ENCODE measurements at regions of chr22 and their contacts with region 1.

Region 1: GRCh38 chr22:30196141-30196879 is 50.2 kb downstream of the LIF start:
- DNase-seq: peak; percentile 100
- H3K4me3 ChIP-seq: peak overlapping the region in 1 of 3 experiments; percentile 1
- H3K27ac ChIP-seq: peak overlapping the region; percentile 99
- H3K4me1 ChIP-seq: peaks cover 37% of the 10 kb centered on the region
- H3K27me3 ChIP-seq: no peaks in the 10 kb centered on the region
- CTCF ChIP-seq: no peak

Region 2: GRCh38 chr22:30116362-30117117 is 79.8 kb before region 1 on chr22:
- CTCF ChIA-PET with region 1: no interaction called
- dilution Hi-C with region 1: no loop called
- in situ Hi-C with region 1: no loop called
- intact Hi-C with region 1: loop called (anchors 5 kb)
- DNase-seq: peak; percentile 76
- H3K4me3 ChIP-seq: no peak overlapping the region
- H3K27ac ChIP-seq: peak overlapping the region; percentile 58
- H3K4me1 ChIP-seq: peaks cover 16% of the 10 kb centered on the region
- H3K27me3 ChIP-seq: no peaks in the 10 kb centered on the region
- CTCF ChIP-seq: no peak

Region 3: GRCh38 chr22:30178181-30179126 is 17.9 kb before region 1 on chr22:
- CTCF ChIA-PET with region 1: no interaction called
- dilution Hi-C with region 1: no loop called
- in situ Hi-C with region 1: no loop called
- intact Hi-C with region 1: loop called (anchors 1 kb)
- DNase-seq: no peak
- H3K4me3 ChIP-seq: no peak overlapping the region
- H3K27ac ChIP-seq: no peak overlapping the region
- H3K4me1 ChIP-seq: peaks cover 18% of the 10 kb centered on the region
- H3K27me3 ChIP-seq: no peaks in the 10 kb centered on the region
- CTCF ChIP-seq: peak in 1 of 2 donors; percentile 16

Region 4: DNA sequence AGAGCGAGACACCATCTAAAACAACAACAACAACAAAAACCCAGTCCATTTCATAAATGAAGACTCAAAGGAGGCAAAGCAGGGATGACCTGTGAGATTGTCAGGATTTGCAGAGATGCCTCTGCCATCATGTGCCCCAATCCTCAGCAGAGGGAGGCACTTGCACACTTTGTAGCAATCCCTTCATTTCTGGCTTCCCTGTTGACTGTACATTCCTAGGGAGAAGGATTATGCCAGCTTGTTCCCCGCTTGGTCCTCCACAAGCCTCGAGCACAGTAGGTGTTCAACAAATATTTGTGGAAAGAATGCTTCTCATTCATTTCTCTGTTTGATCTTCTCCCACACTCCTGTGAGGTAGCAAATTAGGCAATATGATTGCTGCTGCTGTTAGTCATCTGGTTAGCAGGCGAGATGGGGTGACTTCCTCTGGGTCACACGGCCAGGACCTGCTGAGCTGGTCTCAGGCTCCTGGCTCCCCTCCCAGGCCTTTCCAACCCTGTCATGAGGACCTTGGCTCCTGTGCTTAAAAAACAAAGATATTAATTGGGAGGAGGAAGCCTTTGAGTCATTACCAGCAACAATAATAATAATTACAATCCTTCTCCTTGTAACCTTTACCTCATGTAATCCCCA is 16.2 kb after region 1 on chr22:
- CTCF ChIA-PET with region 1: no interaction called
- dilution Hi-C with region 1: no loop called
- in situ Hi-C with region 1: no loop called
- intact Hi-C with region 1: loop called (anchors 2 kb)
- DNase-seq: peak; percentile 99
- H3K4me3 ChIP-seq: no peak overlapping the region
- H3K27ac ChIP-seq: peak overlapping the region; percentile 96
- H3K4me1 ChIP-seq: peaks cover 63% of the 10 kb centered on the region
- H3K27me3 ChIP-seq: no peaks in the 10 kb centered on the region
- CTCF ChIP-seq: peak in 1 of 2 donors; percentile 37

Region 5: DNA sequence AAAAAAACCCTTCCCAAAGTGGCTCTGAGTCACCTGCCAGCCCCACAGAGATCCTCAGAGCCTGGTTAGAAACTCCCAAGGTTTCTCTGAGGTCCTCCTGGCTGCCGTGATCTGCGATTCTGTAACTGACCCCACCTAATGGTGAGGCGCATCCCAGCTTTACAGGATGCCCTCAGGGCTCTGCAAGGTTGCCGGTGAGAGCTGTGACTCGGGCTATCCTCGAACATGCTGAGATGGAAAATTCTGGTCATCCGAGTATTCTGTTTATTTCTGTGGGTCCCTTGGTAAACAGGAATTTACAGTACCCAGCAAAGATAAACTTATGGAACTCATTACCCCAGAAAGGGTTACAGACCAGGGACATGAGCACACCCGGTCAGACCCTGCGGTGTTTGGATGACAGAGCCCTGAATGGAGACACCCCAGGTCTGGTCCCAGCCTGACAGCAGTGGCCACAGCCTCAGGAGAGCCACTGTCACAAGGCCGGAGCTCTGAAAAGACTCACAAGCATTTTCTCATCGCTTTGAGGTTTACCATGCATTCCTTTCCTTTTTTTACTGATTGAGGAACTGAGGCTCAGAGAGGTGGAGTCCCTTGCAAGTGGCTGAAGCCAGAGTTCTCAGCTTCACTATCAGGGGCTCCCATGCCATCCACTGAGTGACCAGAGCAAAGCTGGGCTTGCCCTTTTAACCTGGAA is 28.0 kb after region 1 on chr22:
- CTCF ChIA-PET with region 1: no interaction called
- dilution Hi-C with region 1: no loop called
- in situ Hi-C with region 1: no loop called
- intact Hi-C with region 1: loop called (anchors 1 kb)
- DNase-seq: peak; percentile 93
- H3K4me3 ChIP-seq: no peak overlapping the region
- H3K27ac ChIP-seq: peak overlapping the region; percentile 86
- H3K4me1 ChIP-seq: peaks cover 58% of the 10 kb centered on the region
- H3K27me3 ChIP-seq: no peaks in the 10 kb centered on the region
- CTCF ChIP-seq: peak in 1 of 2 donors; percentile 24

Region 6: GRCh38 chr22:30245985-30246901 is 49.9 kb after region 1 on chr22 and contains the start of gene LIF:
- CTCF ChIA-PET with region 1: no interaction called
- dilution Hi-C with region 1: no loop called
- in situ Hi-C with region 1: no loop called
- intact Hi-C with region 1: loop called (anchors 1 kb)
- DNase-seq: peak; percentile 76
- H3K4me3 ChIP-seq: peak within 1 kb of the TSS; percentile 74 to 80 (median 78)
- H3K27ac ChIP-seq: peak within 1 kb of the TSS; percentile 80
- H3K4me1 ChIP-seq: peaks cover 60% of the 10 kb centered on the region
- H3K27me3 ChIP-seq: no peaks in the 10 kb centered on the region
- CTCF ChIP-seq: peak in 1 of 2 donors; percentile 31
- total RNA-seq, gene LIF: 31.2 to 35.8 TPM

Region 7: DNA sequence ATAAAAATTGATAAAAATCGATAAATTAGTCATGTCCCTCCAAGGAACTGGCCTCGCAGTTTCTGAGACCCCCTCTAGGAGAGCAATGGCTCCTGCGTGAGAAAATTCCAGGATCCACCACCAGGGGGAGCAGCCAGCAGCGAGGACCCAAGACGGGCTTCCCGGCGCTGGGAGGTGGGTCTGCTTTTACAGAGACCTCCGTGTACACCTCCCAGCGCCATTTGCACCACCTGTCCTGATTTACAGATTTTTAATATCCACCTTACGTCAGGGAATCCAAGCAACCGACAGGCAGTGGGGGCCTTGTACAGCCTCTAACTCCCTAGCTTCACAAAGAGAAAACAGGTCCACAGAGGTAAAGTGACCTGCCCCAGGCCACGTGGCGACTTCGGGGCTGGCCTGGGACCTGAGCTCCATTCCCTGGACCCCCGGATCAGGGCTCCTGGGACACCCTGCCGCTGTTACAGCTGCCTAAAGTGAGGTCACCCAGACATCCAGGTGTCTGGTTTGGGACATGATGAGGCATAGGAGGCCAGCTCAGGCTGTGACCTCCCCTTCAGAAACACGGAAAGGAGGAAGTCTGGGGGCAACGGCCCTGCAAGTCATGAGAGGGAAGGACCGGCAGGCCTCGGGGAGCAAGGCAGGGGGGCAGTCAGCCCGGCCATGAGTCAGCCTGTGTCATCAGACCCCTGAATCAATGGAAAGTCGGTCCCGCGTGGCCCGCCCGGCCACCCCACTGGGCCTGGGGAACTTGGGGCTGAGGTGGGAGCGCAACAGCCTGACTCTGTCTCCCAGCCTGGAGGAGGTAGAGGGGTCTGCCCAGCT is 66.8 kb after region 1 on chr22:
- CTCF ChIA-PET with region 1: no interaction called
- dilution Hi-C with region 1: no loop called
- in situ Hi-C with region 1: no loop called
- intact Hi-C with region 1: no loop called
- DNase-seq: no peak
- H3K4me3 ChIP-seq: no peak overlapping the region
- H3K27ac ChIP-seq: peak overlapping the region; percentile 62
- H3K4me1 ChIP-seq: peaks cover 15% of the 10 kb centered on the region
- H3K27me3 ChIP-seq: no peaks in the 10 kb centered on the region
- CTCF ChIP-seq: peak; percentile 90 to 96

Region 8: DNA sequence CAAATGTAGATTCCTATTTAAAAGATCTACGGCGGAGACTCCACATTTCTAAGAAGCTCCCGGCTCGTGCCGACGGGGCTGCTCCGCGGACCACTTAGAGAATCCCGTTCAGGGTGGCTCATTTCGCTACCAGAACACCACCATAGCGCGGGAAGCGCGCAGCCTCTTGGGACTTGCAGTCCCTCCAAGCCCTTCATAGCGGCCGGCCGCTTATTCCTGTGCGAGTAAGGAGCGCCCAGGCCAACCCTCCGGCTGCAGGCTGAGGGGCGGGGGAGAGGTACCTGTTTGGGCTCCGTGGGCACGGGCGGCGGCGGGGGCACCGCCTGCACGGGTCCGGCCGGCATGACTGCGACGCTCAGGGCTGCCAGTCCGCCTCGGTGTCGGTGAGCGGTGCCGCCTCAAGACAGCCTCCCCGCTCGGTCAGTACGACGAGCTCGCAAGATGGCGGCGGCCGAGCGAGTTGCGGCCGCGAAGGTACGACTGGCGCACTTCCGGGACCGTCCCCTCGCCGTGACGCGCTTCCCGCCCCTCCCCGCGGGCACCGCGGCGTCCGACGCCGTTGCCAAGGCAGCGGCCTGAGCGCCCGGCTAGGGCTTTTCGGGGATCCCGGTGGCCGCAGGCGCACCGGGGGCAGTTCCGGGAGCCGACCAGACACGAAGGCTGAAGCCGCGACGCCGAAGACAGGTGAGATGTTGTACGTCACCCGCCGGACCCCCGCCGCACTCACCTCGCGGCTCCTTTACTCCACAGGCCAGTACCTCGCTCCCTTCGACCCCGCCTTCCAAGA is 160.3 kb after region 1 on chr22 and contains the starts of genes CCDC157 and SF3A1:
- CTCF ChIA-PET with region 1: no interaction called
- dilution Hi-C with region 1: no loop called
- in situ Hi-C with region 1: no loop called
- intact Hi-C with region 1: no loop called
- DNase-seq: peak; percentile 91
- H3K4me3 ChIP-seq: peak within 1 kb of the TSS; percentile 75 to 89 (median 85)
- H3K27ac ChIP-seq: peak within 1 kb of the TSS; percentile 85
- H3K4me1 ChIP-seq: peaks cover 15% of the 10 kb centered on the region
- H3K27me3 ChIP-seq: no peaks in the 10 kb centered on the region
- CTCF ChIP-seq: no peak
- total RNA-seq, gene CCDC157: 1.9 to 3.2 TPM
- total RNA-seq, gene SF3A1: 45.0 to 163 TPM

Region 9: DNA sequence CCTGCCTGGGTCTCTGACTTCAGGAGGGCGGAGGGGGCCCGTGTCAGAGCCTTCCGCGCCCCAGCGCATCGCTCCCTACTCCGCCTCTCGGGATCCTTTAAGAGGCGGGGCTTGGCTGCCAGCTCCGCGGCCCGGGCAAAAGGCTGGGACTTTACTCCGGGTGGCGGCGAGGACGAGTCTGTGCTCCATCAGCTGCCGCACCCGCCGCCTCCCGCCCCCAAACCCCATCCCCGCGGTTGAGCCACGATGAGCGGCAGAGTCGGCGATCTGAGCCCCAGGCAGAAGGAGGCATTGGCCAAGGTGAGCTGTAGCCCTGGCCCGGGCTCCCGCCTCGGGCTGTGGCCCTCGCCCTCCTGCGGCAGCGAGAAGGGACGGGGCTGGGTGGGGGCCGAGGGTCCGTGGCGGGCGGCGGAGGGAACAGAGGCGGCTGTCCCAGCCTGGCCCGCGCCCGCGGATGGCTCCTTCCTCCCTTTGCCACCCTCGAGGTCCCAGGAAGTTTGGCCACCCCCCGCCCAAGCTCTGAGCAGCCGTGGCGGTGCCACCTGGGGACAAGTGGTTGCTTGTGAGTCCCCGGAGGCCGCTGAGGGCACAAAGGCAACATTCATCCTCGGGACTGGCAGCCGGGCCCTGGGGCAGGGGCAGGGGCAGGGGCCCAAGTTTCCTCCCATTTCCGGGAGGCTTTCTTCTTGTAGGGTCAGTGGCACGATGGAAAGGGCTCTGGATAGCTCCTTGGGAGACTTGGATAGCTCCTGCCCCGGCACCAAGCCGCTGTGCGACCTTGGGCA is 200.8 kb after region 1 on chr22 and contains the start of gene SEC14L2:
- CTCF ChIA-PET with region 1: no interaction called
- dilution Hi-C with region 1: no loop called
- in situ Hi-C with region 1: no loop called
- intact Hi-C with region 1: loop called (anchors 5 kb)
- DNase-seq: peak; percentile 57
- H3K4me3 ChIP-seq: peak within 1 kb of the TSS; percentile 60 to 94 (median 78)
- H3K27ac ChIP-seq: peak within 1 kb of the TSS; percentile 80
- H3K4me1 ChIP-seq: peaks cover 34% of the 10 kb centered on the region
- H3K27me3 ChIP-seq: no peaks in the 10 kb centered on the region
- CTCF ChIP-seq: no peak
- total RNA-seq, gene SEC14L2: 171 to 266 TPM

Region 10: GRCh38 chr22:30435674-30436126 is 239.4 kb after region 1 on chr22:
- CTCF ChIA-PET with region 1: no interaction called
- dilution Hi-C with region 1: no loop called
- in situ Hi-C with region 1: no loop called
- intact Hi-C with region 1: no loop called
- DNase-seq: no peak
- H3K4me3 ChIP-seq: no peak overlapping the region
- H3K27ac ChIP-seq: no peak overlapping the region
- H3K4me1 ChIP-seq: peaks cover 27% of the 10 kb centered on the region
- H3K27me3 ChIP-seq: no peaks in the 10 kb centered on the region
- CTCF ChIP-seq: no peak

Measured in mammary epithelial cell (primary cell).